ENCODE measurements at regions of chr12 and their contacts with region 1.

Region 1: DNA sequence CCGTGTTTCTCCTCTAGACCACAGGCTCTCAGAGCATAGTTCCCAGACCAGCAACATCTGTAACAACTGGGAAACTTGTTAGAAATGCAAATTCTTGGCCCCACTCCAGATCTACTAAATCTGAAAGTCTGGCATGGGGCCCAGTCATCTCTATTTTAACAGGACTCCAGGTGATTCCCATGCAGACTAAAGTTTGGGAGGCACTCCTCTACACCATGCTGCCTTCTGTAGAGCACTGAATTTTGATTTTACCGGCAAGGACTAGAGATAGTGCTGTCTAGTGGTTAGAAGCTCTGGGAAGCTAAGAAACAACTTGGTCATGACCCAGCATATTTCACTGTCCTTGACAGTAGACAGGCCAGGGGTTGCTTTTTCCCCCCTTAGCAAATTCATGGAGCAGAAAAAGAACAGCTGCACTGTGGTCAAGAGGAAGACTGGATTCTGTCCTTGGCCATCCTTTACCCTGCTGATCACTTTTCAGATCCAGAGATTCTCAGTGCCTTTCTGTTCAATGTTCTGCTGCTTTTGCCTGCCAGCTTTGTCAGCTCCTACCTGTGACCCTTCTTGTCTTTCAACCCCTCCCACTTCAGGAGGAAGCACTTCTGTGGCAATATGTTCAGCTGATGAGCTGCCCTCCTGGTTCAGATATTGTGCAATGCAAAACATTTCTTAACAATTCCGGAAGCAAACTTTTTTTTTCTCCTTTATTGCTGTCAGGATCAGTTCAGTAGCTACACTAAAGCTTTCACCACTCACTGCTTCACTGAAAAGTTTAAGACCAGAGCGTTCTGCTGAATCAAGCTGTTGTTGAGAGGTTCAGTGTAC is 133.8 kb upstream of the NUDT4 start:
- DNase-seq: peak in 5 of 10 donors; percentile 6 to 66 (median 9)
- ATAC-seq: peak; percentile 28 to 62
- H3K4me3 Mint-ChIP-seq: peak overlapping the region; percentile 2 to 88 (median 64)
- H3K27ac Mint-ChIP-seq: peak overlapping the region; percentile 72 to 96 (median 84)
- H3K4me1 Mint-ChIP-seq: peaks cover 15 to 63% (median 54%) of the 10 kb centered on the region in 4 donors
- H3K27me3 Mint-ChIP-seq: no peaks in the 10 kb centered on the region

Region 2: DNA sequence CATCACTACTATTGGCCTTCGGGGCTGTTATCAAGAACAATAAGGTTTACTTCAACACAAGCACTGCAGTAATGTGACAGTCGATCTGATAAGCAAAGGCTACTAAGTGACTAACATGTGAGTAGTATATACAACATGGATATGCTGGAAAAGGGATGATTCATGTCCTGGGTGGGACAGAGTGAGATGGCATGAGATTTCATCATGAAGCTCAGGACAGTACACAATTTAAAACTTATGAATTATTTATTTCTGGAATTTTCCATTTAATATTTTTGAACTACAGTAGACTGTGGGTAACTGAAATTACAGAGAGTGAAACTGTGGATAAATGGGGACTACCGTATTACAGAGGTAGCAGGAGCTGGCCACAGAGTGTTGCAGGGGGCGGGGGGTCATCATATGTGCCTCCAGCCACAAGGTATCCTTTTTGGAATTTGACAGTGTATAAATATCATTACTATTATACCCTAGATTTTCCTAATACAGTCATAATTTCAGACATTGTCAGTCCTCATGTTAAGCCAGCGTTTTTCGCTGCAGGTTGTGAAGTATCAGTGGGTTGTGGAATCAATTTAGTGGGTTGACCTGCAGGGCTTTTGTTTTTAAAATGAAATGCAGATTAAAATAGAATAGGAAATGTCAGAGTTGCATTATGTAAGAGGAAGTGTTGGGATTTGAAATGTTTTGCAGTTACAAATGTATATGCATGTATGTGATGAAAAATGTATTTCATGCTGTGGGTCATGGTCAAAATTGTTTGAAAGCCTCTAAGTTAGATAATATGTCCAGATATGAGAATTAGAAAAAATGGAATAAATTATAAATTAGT is 14.2 kb before region 1 on chr12:
- POLR2A ChIA-PET with region 1: no interaction called
- DNase-seq: no peak
- ATAC-seq: no peak
- H3K4me3 Mint-ChIP-seq: no peak overlapping the region
- H3K27ac Mint-ChIP-seq: no peak overlapping the region
- H3K4me1 Mint-ChIP-seq: peaks cover 0 to under 1% (median 0%) of the 10 kb centered on the region in 4 donors
- H3K27me3 Mint-ChIP-seq: peaks cover 0 to 2% (median 0%) of the 10 kb centered on the region in 5 donors

Region 3: DNA sequence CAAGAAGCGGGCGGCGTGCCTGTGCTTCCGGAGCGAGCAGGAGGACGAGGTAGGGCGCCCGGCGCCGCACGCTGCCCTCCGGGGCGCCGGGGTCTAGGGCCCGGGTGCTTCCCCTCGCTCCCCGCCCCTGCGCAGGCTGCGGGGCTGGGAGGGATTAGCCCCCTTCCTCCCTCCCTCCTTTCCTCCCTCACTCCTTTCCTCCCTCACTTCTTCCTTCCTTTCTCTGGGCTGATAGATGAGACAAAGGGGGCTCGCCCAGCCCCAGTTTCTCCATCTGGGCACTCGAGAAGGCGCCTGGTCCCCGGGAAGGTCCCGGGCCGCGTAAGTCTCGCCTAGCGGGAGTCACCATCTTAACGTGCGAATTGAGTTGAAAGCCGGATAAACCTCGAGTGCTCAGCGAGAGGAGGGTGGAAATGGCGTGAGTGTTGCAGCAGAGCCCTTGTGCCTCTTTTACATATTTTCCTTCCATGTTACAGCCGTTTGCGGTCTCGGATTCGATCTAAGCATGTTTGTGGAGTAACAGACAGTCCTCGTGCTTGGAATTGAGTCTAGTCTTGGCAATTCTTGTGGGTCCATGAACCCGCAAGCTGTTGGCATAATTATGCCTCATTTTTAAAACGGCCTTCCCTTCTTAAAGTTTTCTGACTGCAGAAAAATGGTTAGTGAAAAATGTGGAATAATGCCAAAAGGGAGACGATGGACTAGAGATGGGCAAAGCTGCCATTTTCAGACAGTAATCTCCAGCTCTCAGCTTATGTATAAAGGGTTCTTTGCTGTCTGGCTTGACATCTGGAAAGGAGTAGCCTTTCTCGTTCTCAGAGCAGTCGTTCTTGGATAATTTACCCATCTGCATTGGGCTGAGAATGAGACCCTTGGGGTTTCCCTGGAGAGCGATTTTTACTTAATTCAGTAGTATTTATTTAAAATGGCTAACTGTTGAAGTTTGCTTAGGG is 134.7 kb after region 1 on chr12:
- POLR2A ChIA-PET with region 1: interaction called, 11 read pairs
- DNase-seq: peak; percentile 42 to 76 (median 56)
- ATAC-seq: peak; percentile 63 to 67
- H3K4me3 Mint-ChIP-seq: peak overlapping the region; percentile 97 to 100 (median 100)
- H3K27ac Mint-ChIP-seq: peak overlapping the region; percentile 98 to 100 (median 100)
- H3K4me1 Mint-ChIP-seq: peaks cover 30 to 63% (median 48%) of the 10 kb centered on the region in 4 donors
- H3K27me3 Mint-ChIP-seq: peaks cover 0 to 3% (median 0%) of the 10 kb centered on the region in 5 donors

Measured in naive thymus-derived CD8-positive, alpha-beta T cell (primary cell).